WTC11 (cell line): ENCODE measurements at regions of chr4 and their contacts with region 1.

Region 1: DNA sequence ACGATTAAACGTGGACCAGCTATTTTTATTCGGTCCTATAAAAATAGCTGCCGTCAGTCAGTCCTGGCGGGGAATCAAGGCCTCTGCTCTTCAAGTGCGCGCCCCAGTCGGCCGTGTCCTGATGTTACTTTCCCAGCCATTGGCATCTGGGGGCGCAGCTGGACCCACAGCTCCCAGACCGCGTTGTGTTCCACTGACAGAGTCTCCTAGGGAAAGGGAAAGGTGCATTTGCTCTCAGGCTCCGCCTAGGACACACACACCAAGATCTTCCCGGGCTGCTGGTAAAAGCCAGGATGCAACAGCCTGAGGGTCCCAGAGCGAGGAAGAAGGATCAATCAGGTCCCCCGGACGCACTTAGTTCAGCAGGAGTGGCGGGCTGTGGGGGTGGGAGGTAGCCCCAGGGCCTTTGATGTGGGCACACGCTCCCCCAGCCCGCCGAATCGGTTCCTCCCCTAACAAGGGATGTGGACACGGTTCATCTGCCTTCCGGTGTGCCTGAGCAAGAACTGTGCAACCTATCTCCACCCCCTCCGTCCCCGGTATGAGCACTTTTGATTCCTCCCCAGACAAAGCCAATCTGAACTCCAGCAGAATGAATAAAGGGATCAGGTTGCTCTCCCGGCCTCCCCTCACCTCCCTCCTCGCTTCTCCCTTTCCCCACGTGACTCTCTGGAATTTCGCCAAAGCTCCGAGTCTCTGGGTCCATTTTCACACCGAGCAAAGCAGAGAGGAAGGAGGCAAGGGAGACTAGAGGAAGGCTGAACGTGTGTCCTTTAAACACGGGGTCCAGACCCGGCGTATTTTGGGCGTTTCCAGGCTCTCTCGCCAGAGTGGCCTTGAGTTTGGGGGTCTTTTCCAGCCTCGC is 626 bp upstream of the FRAS1 start:
- DNase-seq: peak; percentile 80
- ATAC-seq: peak; percentile 59
- H3K4me3 Mint-ChIP-seq: peak overlapping the region; percentile 93
- H3K27ac Mint-ChIP-seq: peak overlapping the region; percentile 100
- H3K4me1 Mint-ChIP-seq: peaks cover 32% of the 10 kb centered on the region
- H3K27me3 Mint-ChIP-seq: no peaks in the 10 kb centered on the region; the same call in 1 of the 2 replicates
- CTCF ChIP-seq: no peak

Region 2: GRCh38 chr4:77994194-77994721 is 62.2 kb before region 1 on chr4:
- CTCF ChIA-PET with region 1: interaction called, 36 read pairs
- POLR2A ChIA-PET with region 1: interaction called, 6 read pairs
- DNase-seq: peak; percentile 56
- ATAC-seq: peak; percentile 99
- H3K4me3 Mint-ChIP-seq: no peak overlapping the region
- H3K27ac Mint-ChIP-seq: no peak overlapping the region; the same call in 1 of the 2 replicates
- H3K4me1 Mint-ChIP-seq: peaks cover 44% of the 10 kb centered on the region
- H3K27me3 Mint-ChIP-seq: no peaks in the 10 kb centered on the region
- CTCF ChIP-seq: peak; percentile 51

Region 3: GRCh38 chr4:78079726-78080430 is 23.4 kb after region 1 on chr4:
- CTCF ChIA-PET with region 1: interaction called, 21 read pairs
- POLR2A ChIA-PET with region 1: no interaction called
- DNase-seq: no peak
- ATAC-seq: no peak
- H3K4me3 Mint-ChIP-seq: no peak overlapping the region
- H3K27ac Mint-ChIP-seq: no peak overlapping the region
- H3K4me1 Mint-ChIP-seq: peaks cover 51% of the 10 kb centered on the region
- H3K27me3 Mint-ChIP-seq: no peaks in the 10 kb centered on the region
- CTCF ChIP-seq: no peak

Region 4: DNA sequence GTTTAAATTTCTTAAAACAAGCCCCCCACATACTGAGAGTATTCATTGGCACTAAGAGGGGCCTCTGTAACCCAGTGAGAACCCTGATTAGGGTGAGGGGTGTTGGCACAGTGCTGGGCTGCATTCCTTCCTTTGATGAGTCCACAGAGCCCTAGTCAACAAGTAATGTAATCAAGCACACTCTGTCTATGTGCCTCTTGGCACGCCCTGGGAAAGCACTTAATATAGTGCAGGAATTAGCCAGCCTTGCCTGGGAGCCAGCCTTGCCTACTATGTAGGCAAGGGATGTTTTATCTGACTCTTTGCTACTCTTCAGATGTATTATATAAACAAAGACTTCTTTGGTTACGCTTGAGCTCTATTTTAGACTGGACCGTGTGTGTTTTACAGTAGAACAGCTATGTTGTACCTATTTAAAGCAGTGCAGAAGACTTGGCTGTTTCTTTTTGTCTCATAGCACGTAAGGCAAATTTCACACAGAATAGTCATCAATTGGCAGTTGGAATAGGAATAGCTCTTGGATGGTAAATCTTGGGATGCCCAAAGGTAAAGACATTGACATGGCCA is 64.9 kb after region 1 on chr4:
- CTCF ChIA-PET with region 1: interaction called, 12 read pairs
- POLR2A ChIA-PET with region 1: no interaction called
- DNase-seq: no peak
- ATAC-seq: peak; percentile 28; the same call in 1 of the 2 replicates
- H3K4me3 Mint-ChIP-seq: no peak overlapping the region
- H3K27ac Mint-ChIP-seq: no peak overlapping the region
- H3K4me1 Mint-ChIP-seq: peaks cover 30% of the 10 kb centered on the region
- H3K27me3 Mint-ChIP-seq: no peaks in the 10 kb centered on the region
- CTCF ChIP-seq: no peak

Region 5: DNA sequence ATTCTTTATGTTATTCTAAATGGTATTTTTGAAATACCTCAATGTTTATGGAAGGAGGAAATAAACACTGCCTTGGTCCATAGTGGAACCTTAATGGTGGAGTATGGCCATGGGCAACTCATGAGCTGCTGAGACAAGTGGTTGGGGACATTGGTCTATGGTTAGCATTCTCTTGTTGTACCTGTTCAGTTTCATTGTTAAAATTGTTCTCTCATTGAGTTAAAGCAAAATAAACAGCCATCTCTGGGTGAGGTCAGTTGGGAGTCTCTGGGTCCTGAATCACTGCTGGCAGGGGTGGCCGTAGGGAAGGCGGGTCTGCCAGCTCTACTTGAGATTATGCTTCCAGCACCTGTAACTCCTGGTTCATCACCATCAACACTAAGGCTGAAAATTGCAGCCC is 120.8 kb after region 1 on chr4:
- CTCF ChIA-PET with region 1: interaction called, 60 read pairs
- POLR2A ChIA-PET with region 1: no interaction called
- DNase-seq: no peak
- ATAC-seq: no peak
- H3K4me3 Mint-ChIP-seq: no peak overlapping the region
- H3K27ac Mint-ChIP-seq: no peak overlapping the region
- H3K4me1 Mint-ChIP-seq: peaks cover 65% of the 10 kb centered on the region
- H3K27me3 Mint-ChIP-seq: no peaks in the 10 kb centered on the region
- CTCF ChIP-seq: no peak